Sciatic nerve (tissue), 2 donors: ENCODE measurements at regions of chr4 and their contacts with region 1.

Region 1: GRCh38 chr4:29405116-29405515 is 1315.1 kb upstream of the PCDH7 start:
- DNase-seq: no peak
- ATAC-seq: no peak

Region 2: DNA sequence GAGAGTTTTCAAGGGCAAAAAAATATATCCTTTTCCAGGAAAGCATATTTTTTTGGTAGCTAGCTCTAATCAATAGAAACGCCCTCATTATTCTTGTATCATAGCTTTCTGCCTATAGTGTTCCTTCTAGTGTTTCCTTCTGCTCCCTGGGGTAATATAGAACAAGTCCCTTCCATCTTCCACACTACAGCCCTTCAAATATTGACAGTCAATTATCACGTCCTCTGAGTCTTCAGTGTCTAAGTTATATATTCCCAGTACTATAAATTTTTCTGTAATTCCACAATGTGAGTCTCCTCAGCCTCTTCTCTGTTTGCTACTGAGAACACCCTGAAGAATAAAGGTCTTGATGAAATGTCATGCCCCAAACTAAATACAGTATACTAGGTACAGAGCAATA is 227.1 kb after region 1 on chr4:
- intact Hi-C with region 1: loop called (anchors 5 kb)
- DNase-seq: no peak
- ATAC-seq: no peak